Naive thymus-derived CD4-positive, alpha-beta T cell (primary cell): ENCODE measurements at regions of chr2 and their contacts with region 1.

Region 1: GRCh38 chr2:207625018-207625907 is at the start of gene METTL21A:
- DNase-seq: peak; percentile 91 to 97 (median 95)
- ATAC-seq: peak; percentile 91
- H3K4me3 ChIP-seq: peak within 1 kb of the TSS; percentile 92
- H3K4me3 Mint-ChIP-seq: peak within 1 kb of the TSS; percentile 93 to 96 (median 94)
- H3K27ac ChIP-seq: peak within 1 kb of the TSS; percentile 99
- H3K27ac Mint-ChIP-seq: peak within 1 kb of the TSS; percentile 86 to 96 (median 95)
- H3K4me1 ChIP-seq: peaks cover 4 to 10% of the 10 kb centered on the region in 2 donors
- H3K4me1 Mint-ChIP-seq: peaks cover 32 to 52% (median 40%) of the 10 kb centered on the region in 7 donors
- H3K27me3 ChIP-seq: no peaks in the 10 kb centered on the region
- H3K27me3 Mint-ChIP-seq: peaks cover 0 to 2% (median 0%) of the 10 kb centered on the region in 5 donors
- total RNA-seq, gene METTL21A: 14.6 to 20.5 (median 19.6) TPM

Region 2: DNA sequence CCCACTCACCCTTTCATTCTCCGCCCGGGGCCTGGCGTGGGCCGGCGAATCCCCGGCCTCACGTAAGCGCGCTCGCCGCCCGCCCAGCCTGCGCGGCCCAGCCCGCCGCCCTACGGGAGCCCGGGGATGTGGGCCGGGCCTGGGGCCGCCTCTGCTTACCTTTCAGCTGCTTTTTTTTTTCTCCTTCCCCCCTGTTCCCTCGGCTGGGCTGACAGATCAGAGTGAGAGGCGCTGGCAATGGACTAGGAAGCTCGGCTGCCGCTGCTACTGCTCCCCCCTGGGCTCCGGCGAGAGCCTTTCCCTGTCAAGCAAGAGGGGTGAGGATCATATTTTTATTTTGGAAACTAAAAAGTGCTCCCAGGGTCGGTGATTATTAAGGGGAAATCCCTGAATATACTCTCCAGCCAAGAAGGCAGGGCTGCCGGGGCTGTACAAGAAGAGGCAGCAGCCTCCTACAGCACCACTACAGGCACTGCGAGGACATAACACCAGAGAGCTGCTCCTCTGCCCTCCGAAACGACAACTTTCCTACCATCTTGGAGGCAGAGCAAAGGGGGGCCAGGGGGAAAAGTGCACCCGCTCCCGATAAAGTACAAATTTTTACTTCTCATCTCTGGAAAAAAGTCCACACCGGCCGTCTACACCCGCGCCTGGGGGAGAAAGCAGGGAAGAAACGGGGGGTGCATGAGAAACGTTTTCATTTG is 1539.4 kb before region 1 on chr2 and contains the start of gene INO80D:
- CTCF ChIA-PET with region 1: no interaction called
- POLR2A ChIA-PET with region 1: interaction called, 3 read pairs
- intact Hi-C with region 1: loop called in 1 of 2 experiments (anchors 1 kb)
- DNase-seq: peak; percentile 71 to 92 (median 90)
- ATAC-seq: peak; percentile 95
- H3K4me3 ChIP-seq: peak within 1 kb of the TSS; percentile 97
- H3K4me3 Mint-ChIP-seq: peak within 1 kb of the TSS; percentile 96 to 99 (median 98)
- H3K27ac ChIP-seq: peak within 1 kb of the TSS; percentile 97
- H3K27ac Mint-ChIP-seq: peak within 1 kb of the TSS; percentile 98 to 100 (median 100)
- H3K4me1 ChIP-seq: peaks cover 0 to 9% of the 10 kb centered on the region in 2 donors
- H3K4me1 Mint-ChIP-seq: peaks cover 25 to 61% (median 47%) of the 10 kb centered on the region in 7 donors
- H3K27me3 ChIP-seq: no peaks in the 10 kb centered on the region
- H3K27me3 Mint-ChIP-seq: no peaks in the 10 kb centered on the region
- total RNA-seq, gene INO80D: 30.7 to 50.9 (median 43.4) TPM

Region 3: GRCh38 chr2:206765242-206766056 is 859.8 kb before region 1 on chr2 and contains the starts of genes FASTKD2 and MDH1B:
- CTCF ChIA-PET with region 1: no interaction called
- POLR2A ChIA-PET with region 1: interaction called, 5 read pairs
- intact Hi-C with region 1: loop called (anchors 1 kb)
- DNase-seq: peak; percentile 62 to 91 (median 85)
- ATAC-seq: peak; percentile 93
- H3K4me3 ChIP-seq: peak within 1 kb of the TSS; percentile 70
- H3K4me3 Mint-ChIP-seq: peak within 1 kb of the TSS in 8 of 10 donors; percentile 89 to 96 (median 94)
- H3K27ac ChIP-seq: peak within 1 kb of the TSS; percentile 95
- H3K27ac Mint-ChIP-seq: peak within 1 kb of the TSS; percentile 93 to 99 (median 97)
- H3K4me1 ChIP-seq: peaks cover 12 to 16% of the 10 kb centered on the region in 2 donors
- H3K4me1 Mint-ChIP-seq: peaks cover 13 to 46% (median 41%) of the 10 kb centered on the region in 7 donors
- H3K27me3 ChIP-seq: no peaks in the 10 kb centered on the region
- H3K27me3 Mint-ChIP-seq: peaks cover 0 to 4% (median 0%) of the 10 kb centered on the region in 5 donors
- total RNA-seq, gene FASTKD2: 16.5 to 31.9 (median 24.5) TPM
- total RNA-seq, gene MDH1B: 0.17 to 0.54 (median 0.24) TPM in 4 of 5 experiments, not detected in the other

Region 4: GRCh38 chr2:207571370-207571769 is 53.9 kb before region 1 on chr2:
- CTCF ChIA-PET with region 1: no interaction called
- POLR2A ChIA-PET with region 1: interaction called, 3 read pairs
- intact Hi-C with region 1: loop called in 1 of 2 experiments (anchors 2 kb)
- DNase-seq: no peak
- ATAC-seq: no peak
- H3K4me3 ChIP-seq: no peak overlapping the region
- H3K4me3 Mint-ChIP-seq: no peak overlapping the region
- H3K27ac ChIP-seq: no peak overlapping the region
- H3K27ac Mint-ChIP-seq: peak overlapping the region in 1 of 9 donors; percentile 32
- H3K4me1 ChIP-seq: no peaks in the 10 kb centered on the region
- H3K4me1 Mint-ChIP-seq: peaks cover 6 to 24% (median 12%) of the 10 kb centered on the region in 7 donors
- H3K27me3 ChIP-seq: no peaks in the 10 kb centered on the region
- H3K27me3 Mint-ChIP-seq: no peaks in the 10 kb centered on the region

Region 5: GRCh38 chr2:207734264-207734635 is 109.0 kb after region 1 on chr2:
- CTCF ChIA-PET with region 1: no interaction called
- POLR2A ChIA-PET with region 1: no interaction called
- intact Hi-C with region 1: loop called in 1 of 2 experiments (anchors 1 kb)
- DNase-seq: no peak
- ATAC-seq: no peak
- H3K4me3 ChIP-seq: no peak overlapping the region
- H3K4me3 Mint-ChIP-seq: no peak overlapping the region
- H3K27ac ChIP-seq: no peak overlapping the region
- H3K27ac Mint-ChIP-seq: no peak overlapping the region
- H3K4me1 ChIP-seq: peaks cover 0 to 3% of the 10 kb centered on the region in 2 donors
- H3K4me1 Mint-ChIP-seq: peaks cover 0 to 8% (median 4%) of the 10 kb centered on the region in 7 donors
- H3K27me3 ChIP-seq: no peaks in the 10 kb centered on the region
- H3K27me3 Mint-ChIP-seq: no peaks in the 10 kb centered on the region

Region 6: DNA sequence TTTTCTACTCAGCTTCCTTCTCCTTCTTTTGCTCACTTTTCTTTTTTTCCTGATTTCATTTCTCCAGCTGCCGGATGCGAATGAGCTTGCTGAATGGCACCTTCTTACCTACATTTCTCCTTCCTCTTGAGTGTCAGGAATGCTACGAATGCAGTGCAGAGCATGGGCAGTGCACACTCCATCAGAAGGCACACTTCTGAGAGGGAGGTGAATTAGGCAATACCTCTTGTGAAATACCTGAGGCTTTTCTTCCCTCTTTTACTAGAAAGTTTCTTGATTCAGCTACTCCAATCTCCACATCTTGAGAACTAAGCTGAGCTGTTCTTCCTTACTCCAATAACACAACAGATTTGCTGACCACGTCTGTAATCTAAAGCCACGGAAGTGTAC is 348.9 kb after region 1 on chr2:
- CTCF ChIA-PET with region 1: no interaction called
- POLR2A ChIA-PET with region 1: no interaction called
- intact Hi-C with region 1: loop called in 1 of 2 experiments (anchors 2 kb)
- DNase-seq: no peak
- ATAC-seq: peak; percentile 34
- H3K4me3 ChIP-seq: no peak overlapping the region
- H3K4me3 Mint-ChIP-seq: no peak overlapping the region
- H3K27ac ChIP-seq: no peak overlapping the region
- H3K27ac Mint-ChIP-seq: peak overlapping the region in 2 of 9 donors; percentile 2 to 65
- H3K4me1 ChIP-seq: no peaks in the 10 kb centered on the region
- H3K4me1 Mint-ChIP-seq: peaks cover 5 to 43% (median 31%) of the 10 kb centered on the region in 7 donors
- H3K27me3 ChIP-seq: no peaks in the 10 kb centered on the region
- H3K27me3 Mint-ChIP-seq: no peaks in the 10 kb centered on the region

Region 7: DNA sequence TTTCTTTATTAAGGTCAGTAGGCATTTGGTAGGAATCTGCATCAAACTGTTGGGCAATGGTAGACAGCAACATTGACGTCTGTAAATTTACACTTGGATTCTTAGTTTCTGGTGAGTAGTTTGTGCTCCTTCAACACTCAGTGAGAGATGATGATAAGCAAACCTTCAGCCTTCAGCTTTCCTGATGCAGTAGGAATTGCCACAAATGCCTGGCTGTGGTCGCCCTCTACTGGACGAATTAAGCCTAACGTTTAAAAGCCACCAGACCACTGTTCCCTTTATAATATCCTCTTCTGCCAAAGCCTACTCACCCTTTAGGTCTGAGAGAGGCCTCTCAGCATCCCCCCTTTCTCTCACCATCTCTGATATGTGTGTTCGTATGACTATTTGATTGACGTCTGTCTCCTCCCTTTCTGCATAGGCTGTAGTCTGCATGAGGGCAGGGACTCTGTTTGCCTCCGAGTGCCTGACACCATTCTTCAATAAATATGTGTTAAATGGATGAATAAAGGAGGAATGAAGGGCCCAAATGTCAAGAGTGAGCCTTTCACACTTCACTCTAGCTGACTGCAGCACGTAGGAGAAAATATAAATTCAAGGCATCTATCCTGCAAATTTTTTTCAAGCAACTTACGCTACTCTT is 447.1 kb after region 1 on chr2:
- CTCF ChIA-PET with region 1: interaction called, 3 read pairs
- POLR2A ChIA-PET with region 1: no interaction called
- intact Hi-C with region 1: loop called in 1 of 2 experiments (anchors 1 kb)
- DNase-seq: peak; percentile 15 to 62 (median 38)
- ATAC-seq: peak; percentile 78
- H3K4me3 ChIP-seq: no peak overlapping the region
- H3K4me3 Mint-ChIP-seq: no peak overlapping the region
- H3K27ac ChIP-seq: no peak overlapping the region
- H3K27ac Mint-ChIP-seq: no peak overlapping the region
- H3K4me1 ChIP-seq: no peaks in the 10 kb centered on the region
- H3K4me1 Mint-ChIP-seq: no peaks in the 10 kb centered on the region
- H3K27me3 ChIP-seq: peaks cover 0 to 3% of the 10 kb centered on the region in 2 donors
- H3K27me3 Mint-ChIP-seq: peaks cover 5 to 17% (median 10%) of the 10 kb centered on the region in 5 donors